ENCODE measurements at regions of chr1 and their contacts with region 1.

Region 1: GRCh38 chr1:110619412-110620249 is 13.5 kb upstream of the KCNA2 start:
- DNase-seq: peak; percentile 87 to 92 (median 87)
- H3K4me3 ChIP-seq: peak overlapping the region; percentile 70
- H3K4me3 Mint-ChIP-seq: peak overlapping the region; percentile 84 to 94 (median 90)
- H3K27ac ChIP-seq: peak overlapping the region; percentile 60
- H3K27ac Mint-ChIP-seq: peak overlapping the region; percentile 51 to 94 (median 90)
- H3K4me1 ChIP-seq: peaks cover 33% of the 10 kb centered on the region
- H3K4me1 Mint-ChIP-seq: peaks cover 33 to 39% (median 37%) of the 10 kb centered on the region in 3 donors
- H3K27me3 ChIP-seq: no peaks in the 10 kb centered on the region
- H3K27me3 Mint-ChIP-seq: peaks cover 0 to 7% of the 10 kb centered on the region in 2 donors

Region 2: GRCh38 chr1:110508038-110508940 is 111.3 kb before region 1 on chr1:
- CTCF ChIA-PET with region 1: no interaction called
- POLR2A ChIA-PET with region 1: no interaction called
- DNase-seq: no peak
- H3K4me3 ChIP-seq: no peak overlapping the region
- H3K4me3 Mint-ChIP-seq: no peak overlapping the region
- H3K27ac ChIP-seq: no peak overlapping the region
- H3K27ac Mint-ChIP-seq: peak overlapping the region in 1 of 8 donors; percentile 35
- H3K4me1 ChIP-seq: no peaks in the 10 kb centered on the region
- H3K4me1 Mint-ChIP-seq: no peaks in the 10 kb centered on the region
- H3K27me3 ChIP-seq: no peaks in the 10 kb centered on the region
- H3K27me3 Mint-ChIP-seq: peaks cover 12 to 28% of the 10 kb centered on the region in 2 donors

Region 3: GRCh38 chr1:110554871-110555801 is 64.5 kb before region 1 on chr1:
- CTCF ChIA-PET with region 1: interaction called, 22 read pairs
- POLR2A ChIA-PET with region 1: no interaction called
- DNase-seq: peak; percentile 23 to 61 (median 41)
- H3K4me3 ChIP-seq: no peak overlapping the region
- H3K4me3 Mint-ChIP-seq: peak overlapping the region in 5 of 7 donors; percentile 15 to 57 (median 44)
- H3K27ac ChIP-seq: no peak overlapping the region
- H3K27ac Mint-ChIP-seq: no peak overlapping the region
- H3K4me1 ChIP-seq: no peaks in the 10 kb centered on the region
- H3K4me1 Mint-ChIP-seq: peaks cover 0 to 4% (median 2%) of the 10 kb centered on the region in 3 donors
- H3K27me3 ChIP-seq: peaks cover 23% of the 10 kb centered on the region
- H3K27me3 Mint-ChIP-seq: peaks cover 28 to 66% of the 10 kb centered on the region in 2 donors

Region 4: DNA sequence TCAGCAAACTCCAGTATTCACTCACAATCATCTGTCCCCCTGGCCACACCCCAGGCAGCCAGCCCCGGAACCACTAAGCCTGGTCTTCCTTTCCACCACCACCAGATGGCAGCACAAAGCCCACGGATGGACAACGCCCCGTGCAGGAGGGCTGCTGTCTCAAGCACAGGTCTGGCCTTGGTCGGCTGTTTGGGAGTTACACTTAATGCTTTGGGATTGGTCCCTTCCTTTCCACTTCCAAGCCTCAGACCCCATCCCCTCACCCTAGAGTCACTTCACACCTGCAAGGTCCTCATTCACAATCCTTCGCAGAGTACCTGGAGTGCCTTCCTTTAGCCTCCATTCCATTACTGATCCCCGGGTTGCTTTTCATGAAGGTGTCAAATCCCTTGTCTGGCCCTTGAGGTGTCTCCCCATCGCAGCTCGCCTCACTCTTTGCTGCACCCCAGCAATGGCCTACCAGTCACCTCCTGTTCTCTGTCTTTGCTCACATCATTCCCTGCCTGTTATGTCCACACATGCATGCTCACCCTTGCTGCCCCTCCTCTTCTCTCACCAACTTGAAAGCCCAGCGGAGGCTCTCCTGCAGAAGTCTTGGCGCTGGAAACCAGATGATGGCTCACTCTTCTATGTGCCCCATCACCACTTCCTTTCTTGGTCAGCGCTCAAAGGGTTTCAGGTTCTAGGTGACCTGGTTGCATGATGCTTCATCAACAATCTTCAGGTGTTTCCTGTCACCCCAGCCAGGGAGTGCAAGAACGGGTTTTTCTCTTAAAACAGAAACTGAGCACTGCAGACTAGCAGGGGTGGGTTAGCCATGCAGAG is 11.4 kb after region 1 on chr1:
- CTCF ChIA-PET with region 1: interaction called, 27 read pairs
- POLR2A ChIA-PET with region 1: interaction called, 3 read pairs
- DNase-seq: peak; percentile 76 to 89 (median 83)
- H3K4me3 ChIP-seq: peak overlapping the region; percentile 45
- H3K4me3 Mint-ChIP-seq: no peak overlapping the region
- H3K27ac ChIP-seq: peak overlapping the region; percentile 22
- H3K27ac Mint-ChIP-seq: no peak overlapping the region
- H3K4me1 ChIP-seq: peaks cover 59% of the 10 kb centered on the region
- H3K4me1 Mint-ChIP-seq: peaks cover 34 to 66% (median 40%) of the 10 kb centered on the region in 3 donors
- H3K27me3 ChIP-seq: no peaks in the 10 kb centered on the region
- H3K27me3 Mint-ChIP-seq: no peaks in the 10 kb centered on the region

Region 5: DNA sequence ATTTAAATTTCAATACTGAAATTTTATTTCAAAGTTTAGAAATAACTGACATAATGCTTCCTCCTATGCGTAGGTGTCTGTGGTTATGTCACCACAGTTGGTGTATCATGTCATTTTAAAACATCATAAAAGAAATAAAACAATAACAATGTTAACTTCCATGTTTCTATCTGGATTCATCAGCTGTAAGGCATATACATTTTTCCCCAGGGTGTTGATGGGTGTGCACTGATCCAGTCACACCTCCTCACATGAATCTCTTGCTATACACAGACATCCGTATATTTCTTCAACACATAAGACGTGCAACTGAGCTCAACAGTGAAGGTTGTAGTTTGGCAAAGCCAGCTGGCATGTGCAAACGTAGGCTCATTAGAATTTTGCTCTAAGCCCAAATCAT is 48.9 kb after region 1 on chr1:
- CTCF ChIA-PET with region 1: interaction called, 19 read pairs
- POLR2A ChIA-PET with region 1: interaction called, 6 read pairs
- DNase-seq: peak in 3 of 5 donors; percentile 42 to 53 (median 46)
- H3K4me3 ChIP-seq: peak overlapping the region; percentile 0
- H3K4me3 Mint-ChIP-seq: peak overlapping the region; percentile 80 to 100 (median 87)
- H3K27ac ChIP-seq: peak overlapping the region; percentile 56
- H3K27ac Mint-ChIP-seq: peak overlapping the region in 7 of 8 donors; percentile 87 to 95 (median 93)
- H3K4me1 ChIP-seq: peaks cover 67% of the 10 kb centered on the region
- H3K4me1 Mint-ChIP-seq: peaks cover 25 to 43% (median 31%) of the 10 kb centered on the region in 3 donors
- H3K27me3 ChIP-seq: no peaks in the 10 kb centered on the region
- H3K27me3 Mint-ChIP-seq: peaks cover 0 to 5% of the 10 kb centered on the region in 2 donors

Region 6: DNA sequence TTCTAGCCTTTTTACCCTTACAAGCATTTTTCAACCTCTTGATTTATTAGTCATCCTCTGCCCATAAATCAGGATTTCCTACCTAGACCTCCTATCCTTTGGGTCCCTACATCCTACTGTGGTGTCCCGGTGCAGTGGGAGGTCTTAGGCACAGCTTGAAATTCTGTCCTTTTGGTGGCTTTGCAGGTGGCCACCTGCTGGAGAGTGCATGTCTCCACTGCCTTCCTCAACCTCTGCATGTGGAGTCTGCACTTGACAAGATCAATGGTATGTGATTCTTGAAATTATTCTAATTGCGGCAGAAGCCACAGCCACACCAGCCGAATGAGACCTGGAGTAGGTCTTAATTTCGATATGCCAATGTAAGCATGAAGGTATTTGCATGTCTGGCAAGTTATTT is 66.6 kb after region 1 on chr1:
- CTCF ChIA-PET with region 1: interaction called, 14 read pairs
- POLR2A ChIA-PET with region 1: no interaction called
- DNase-seq: peak in 3 of 5 donors; percentile 14 to 59 (median 17)
- H3K4me3 ChIP-seq: no peak overlapping the region
- H3K4me3 Mint-ChIP-seq: no peak overlapping the region
- H3K27ac ChIP-seq: no peak overlapping the region
- H3K27ac Mint-ChIP-seq: no peak overlapping the region
- H3K4me1 ChIP-seq: no peaks in the 10 kb centered on the region
- H3K4me1 Mint-ChIP-seq: peaks cover 5 to 13% (median 8%) of the 10 kb centered on the region in 3 donors
- H3K27me3 ChIP-seq: no peaks in the 10 kb centered on the region
- H3K27me3 Mint-ChIP-seq: no peaks in the 10 kb centered on the region

Region 7: DNA sequence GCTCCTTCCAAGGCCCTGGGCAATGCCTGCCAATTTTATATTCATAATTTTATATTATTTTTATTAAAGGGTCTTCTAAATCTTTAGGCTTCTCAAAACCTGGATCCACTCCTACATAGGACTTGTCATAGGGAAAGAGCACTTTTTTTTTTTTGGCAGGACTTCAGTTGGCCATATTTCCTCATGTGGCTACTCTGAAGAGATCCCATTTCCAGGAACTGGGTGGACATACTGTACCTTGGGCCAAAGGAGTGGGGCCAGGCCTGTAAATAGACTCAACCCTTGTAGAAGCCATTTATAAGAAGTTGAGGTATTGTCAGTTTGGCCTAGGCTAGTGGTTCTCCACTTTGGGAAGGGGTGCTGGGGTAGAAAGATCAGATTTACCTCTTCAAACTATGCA is 152.0 kb after region 1 on chr1:
- CTCF ChIA-PET with region 1: interaction called, 135 read pairs
- POLR2A ChIA-PET with region 1: no interaction called
- DNase-seq: no peak
- H3K4me3 ChIP-seq: no peak overlapping the region
- H3K4me3 Mint-ChIP-seq: no peak overlapping the region
- H3K27ac ChIP-seq: no peak overlapping the region
- H3K27ac Mint-ChIP-seq: no peak overlapping the region
- H3K4me1 ChIP-seq: no peaks in the 10 kb centered on the region
- H3K4me1 Mint-ChIP-seq: no peaks in the 10 kb centered on the region
- H3K27me3 ChIP-seq: no peaks in the 10 kb centered on the region
- H3K27me3 Mint-ChIP-seq: peaks cover 11 to 39% of the 10 kb centered on the region in 2 donors

Region 8: GRCh38 chr1:110787328-110788071 is 167.9 kb after region 1 on chr1:
- CTCF ChIA-PET with region 1: interaction called, 126 read pairs
- POLR2A ChIA-PET with region 1: interaction called, 12 read pairs
- DNase-seq: peak in 4 of 5 donors; percentile 28 to 77 (median 70)
- H3K4me3 ChIP-seq: peak overlapping the region; percentile 35
- H3K4me3 Mint-ChIP-seq: peak overlapping the region; percentile 66 to 79 (median 72)
- H3K27ac ChIP-seq: no peak overlapping the region
- H3K27ac Mint-ChIP-seq: peak overlapping the region; percentile 70 to 93 (median 80)
- H3K4me1 ChIP-seq: peaks cover 63% of the 10 kb centered on the region
- H3K4me1 Mint-ChIP-seq: peaks cover 65 to 68% (median 68%) of the 10 kb centered on the region in 3 donors
- H3K27me3 ChIP-seq: no peaks in the 10 kb centered on the region
- H3K27me3 Mint-ChIP-seq: no peaks in the 10 kb centered on the region